ENCODE measurements at regions of chr6 and their contacts with region 1.

Region 1: GRCh38 chr6:70369332-70369950 is 43.9 kb upstream of the FAM135A start:
- DNase-seq: peak; percentile 26
- H3K4me3 ChIP-seq: no peak overlapping the region
- H3K27ac ChIP-seq: no peak overlapping the region
- H3K27me3 ChIP-seq: peaks cover 28% of the 10 kb centered on the region
- CTCF ChIP-seq: peak; percentile 93

Region 2: DNA sequence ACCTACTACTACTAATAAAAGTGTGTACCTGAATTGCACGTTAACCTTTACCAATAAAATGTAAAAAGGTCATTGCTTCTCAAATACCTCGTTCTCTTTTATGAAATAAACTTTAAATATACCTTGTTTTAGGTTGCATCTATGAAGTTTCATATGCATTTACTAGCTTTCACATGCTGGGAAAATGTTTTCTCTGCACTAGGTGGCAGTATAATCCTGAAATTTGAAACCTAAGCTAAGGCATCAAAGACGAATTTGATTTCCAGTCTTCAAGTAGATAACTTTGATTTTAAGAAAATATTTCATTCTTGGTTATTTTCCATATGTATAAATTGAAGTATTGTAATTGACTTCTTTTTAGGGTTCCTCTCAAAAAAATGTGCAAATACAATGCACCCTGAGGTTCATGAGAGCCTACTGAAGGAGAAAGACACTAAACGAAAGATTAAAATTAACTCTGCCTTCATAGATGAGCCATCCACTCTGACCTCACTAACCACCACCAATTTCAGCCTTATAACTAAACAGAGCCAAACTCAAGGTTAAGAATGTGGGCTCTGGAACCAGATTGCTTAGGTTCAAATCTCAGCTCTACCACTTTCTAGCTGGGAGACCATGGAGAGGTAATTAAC is 59.3 kb before region 1 on chr6:
- CTCF ChIA-PET with region 1: interaction called, 136 read pairs
- POLR2A ChIA-PET with region 1: no interaction called
- DNase-seq: no peak
- H3K4me3 ChIP-seq: no peak overlapping the region
- H3K27ac ChIP-seq: no peak overlapping the region
- H3K27me3 ChIP-seq: peaks cover 22% of the 10 kb centered on the region
- CTCF ChIP-seq: peak; percentile 64

Region 3: DNA sequence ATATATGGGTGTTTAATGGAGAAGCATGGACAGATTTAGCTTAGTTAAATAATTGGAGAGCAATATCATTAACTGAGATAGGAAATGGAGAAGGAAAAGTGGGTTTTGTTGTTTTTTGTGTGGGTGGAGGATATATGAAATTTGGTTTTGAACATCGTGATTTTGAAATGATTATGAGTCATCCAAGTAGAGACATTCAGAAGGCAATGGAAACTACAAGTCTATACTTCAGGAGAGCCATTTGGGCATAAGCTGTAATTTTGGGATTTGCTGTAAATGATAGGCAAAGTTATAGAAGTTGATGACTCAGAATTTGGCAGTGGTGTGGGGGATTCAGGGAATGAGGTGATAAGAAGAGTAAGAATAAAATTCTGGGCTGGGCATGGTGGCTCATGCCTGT is 16.5 kb after region 1 on chr6:
- CTCF ChIA-PET with region 1: interaction called, 14 read pairs
- POLR2A ChIA-PET with region 1: no interaction called
- DNase-seq: no peak
- H3K4me3 ChIP-seq: no peak overlapping the region
- H3K27ac ChIP-seq: no peak overlapping the region
- H3K27me3 ChIP-seq: peaks cover 5% of the 10 kb centered on the region
- CTCF ChIP-seq: no peak

Region 4: GRCh38 chr6:70667711-70668498 is 298.5 kb after region 1 on chr6 and contains the start of gene SMAP1:
- CTCF ChIA-PET with region 1: interaction called, 11 read pairs
- POLR2A ChIA-PET with region 1: no interaction called
- DNase-seq: peak; percentile 71
- H3K4me3 ChIP-seq: peak within 1 kb of the TSS; percentile 88
- H3K27ac ChIP-seq: peak within 1 kb of the TSS; percentile 58
- H3K27me3 ChIP-seq: no peaks in the 10 kb centered on the region
- CTCF ChIP-seq: no peak
- polyA plus RNA-seq, gene SMAP1: 23.6 and 25.0 TPM in 2 replicates

Measured in AG04450 (cell line).